H1 (cell line): ENCODE measurements at regions of chr1 and their contacts with region 1.

Region 1: DNA sequence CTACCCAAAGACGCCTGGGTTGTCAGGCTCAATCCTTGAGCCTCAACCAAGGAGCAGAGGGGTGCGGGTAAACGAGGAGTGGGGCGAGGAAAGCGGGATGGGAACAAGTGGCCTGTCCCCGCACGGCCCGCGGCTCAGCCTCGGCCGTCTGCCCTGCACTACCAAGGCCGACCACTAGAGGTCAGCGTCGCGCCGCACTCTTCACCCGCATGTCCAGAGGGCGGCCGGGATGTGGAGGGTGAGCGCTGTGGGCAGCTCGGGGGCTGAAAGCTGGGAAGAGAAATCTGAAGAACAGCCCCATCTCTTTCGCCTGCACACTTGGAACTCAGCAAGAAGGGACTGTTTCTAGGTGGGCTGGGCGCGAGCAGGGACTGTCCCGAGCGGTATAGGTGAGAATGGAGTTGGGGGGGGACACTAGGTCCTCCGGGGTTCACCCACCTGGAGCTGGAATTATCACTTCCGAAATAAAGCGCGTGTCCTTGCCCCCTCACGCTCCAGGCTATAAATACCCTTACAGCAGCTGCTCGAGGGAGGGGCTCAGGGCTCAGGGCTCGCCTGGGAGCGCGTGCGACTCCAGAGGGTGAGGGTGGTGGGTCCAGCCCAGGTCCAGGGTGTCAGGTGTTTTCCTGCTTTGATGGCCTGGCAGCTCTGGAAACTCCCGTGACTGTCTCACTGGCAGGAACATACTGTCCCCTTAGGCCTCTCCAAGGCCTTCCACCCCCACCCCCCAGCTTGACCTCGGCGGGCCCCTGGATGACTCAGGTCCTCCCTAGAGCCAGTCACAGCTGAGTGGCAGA is 9.8 kb downstream of the SLC30A2 start:
- DNase-seq: peak in 1 of 2 experiments; percentile 96
- H3K4me3 ChIP-seq: peak overlapping the region; percentile 39 to 85 (median 76)
- H3K27ac ChIP-seq: no peak overlapping the region
- H3K4me1 ChIP-seq: peaks cover 0 to 8% (median 6%) of the 10 kb centered on the region in 4 experiments; a peak in 5 of 7 replicates
- H3K27me3 ChIP-seq: peaks cover 6 to 26% (median 20%) of the 10 kb centered on the region in 4 experiments; a peak in 6 of 7 replicates
- CTCF ChIP-seq: peak; percentile 90 to 99 (median 93)
- EP300 ChIP-seq: no peak
- POLR2A ChIP-seq: no peak
- RAD21 ChIP-seq: peak; percentile 92 to 95

Region 2: DNA sequence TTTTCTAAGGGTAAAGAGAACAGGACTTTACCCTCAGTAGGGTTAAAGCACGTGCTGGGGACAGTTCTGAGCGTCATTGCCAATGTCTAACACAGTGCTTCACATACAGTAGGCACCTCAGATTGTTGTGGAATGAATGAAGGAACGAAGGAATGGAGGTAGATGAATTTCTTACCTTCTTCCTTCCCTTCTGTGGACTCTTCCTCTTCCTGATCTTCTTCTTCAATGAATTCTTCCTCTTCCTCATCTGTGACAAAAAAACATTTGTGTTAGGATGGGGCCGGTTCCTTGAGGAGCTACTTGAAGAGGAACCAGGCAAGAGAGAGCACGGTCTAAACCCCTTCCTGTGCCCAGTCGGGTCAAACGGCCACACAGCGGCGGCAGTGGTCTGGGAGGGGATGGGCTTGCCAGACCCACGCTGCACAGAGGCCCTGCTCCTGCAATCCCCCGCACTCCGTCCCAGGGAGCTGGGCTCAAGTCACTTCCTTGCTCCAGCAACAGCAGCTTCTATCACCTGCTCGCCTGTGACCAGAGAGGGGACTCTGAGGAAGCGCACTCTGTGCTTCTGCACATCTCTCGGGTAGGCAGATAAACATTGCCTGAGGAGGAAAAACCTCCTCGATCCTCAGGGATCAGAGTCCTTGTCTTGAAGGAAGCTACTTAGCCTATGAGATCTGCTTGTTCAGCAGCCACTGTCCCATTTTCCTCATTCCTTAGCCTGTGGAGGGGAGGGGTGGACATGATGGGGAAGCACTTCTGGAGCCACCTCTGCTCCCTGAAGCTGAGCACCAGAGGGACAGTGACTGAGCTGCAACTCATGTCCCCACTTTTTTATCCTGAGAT is 17.8 kb after region 1 on chr1:
- CTCF ChIA-PET with region 1: interaction called, 14 read pairs
- POLR2A ChIA-PET with region 1: interaction called, 4 read pairs
- DNase-seq: no peak
- H3K4me3 ChIP-seq: no peak overlapping the region
- H3K27ac ChIP-seq: no peak overlapping the region
- H3K4me1 ChIP-seq: 0 out of 7 replicates have a peak, but pooled peaks cover 0 to 2% (median 0%) of the 10 kb centered on the region in 4 experiments
- H3K27me3 ChIP-seq: peaks cover 0 to 6% (median 2%) of the 10 kb centered on the region in 4 experiments; a peak in 3 of 7 replicates
- CTCF ChIP-seq: no peak
- EP300 ChIP-seq: no peak
- POLR2A ChIP-seq: no peak
- RAD21 ChIP-seq: peak in 1 of 2 experiments; percentile 30; a peak in 1 of 4 replicates

Region 3: DNA sequence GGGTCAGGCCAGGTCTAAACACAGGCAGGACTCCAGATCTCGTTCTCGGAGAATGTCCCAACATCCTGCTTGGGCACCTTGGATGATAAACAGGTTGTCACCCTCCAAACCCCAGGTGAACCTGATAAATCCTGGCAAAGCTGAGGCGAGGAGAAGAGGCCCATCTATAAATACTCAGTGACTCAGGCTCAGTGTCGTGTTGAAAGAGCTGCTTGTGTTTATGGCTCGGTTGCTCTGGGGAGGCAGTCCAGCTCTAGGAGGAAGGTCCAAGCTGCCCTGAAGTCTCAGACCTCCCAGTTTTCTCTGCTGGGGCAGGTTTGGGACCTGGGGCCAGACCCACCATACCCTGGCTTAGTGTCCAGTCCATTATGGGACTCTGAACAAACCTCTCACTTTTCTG is 47.1 kb after region 1 on chr1:
- CTCF ChIA-PET with region 1: interaction called, 10 read pairs
- POLR2A ChIA-PET with region 1: no interaction called
- DNase-seq: no peak
- H3K4me3 ChIP-seq: no peak overlapping the region
- H3K27ac ChIP-seq: no peak overlapping the region
- H3K4me1 ChIP-seq: peaks cover 0 to 9% (median 6%) of the 10 kb centered on the region in 4 experiments; a peak in 4 of 7 replicates
- H3K27me3 ChIP-seq: no peaks in the 10 kb centered on the region; a peak in 1 of 7 replicates
- CTCF ChIP-seq: no peak
- EP300 ChIP-seq: no peak
- POLR2A ChIP-seq: no peak
- RAD21 ChIP-seq: no peak

Region 4: DNA sequence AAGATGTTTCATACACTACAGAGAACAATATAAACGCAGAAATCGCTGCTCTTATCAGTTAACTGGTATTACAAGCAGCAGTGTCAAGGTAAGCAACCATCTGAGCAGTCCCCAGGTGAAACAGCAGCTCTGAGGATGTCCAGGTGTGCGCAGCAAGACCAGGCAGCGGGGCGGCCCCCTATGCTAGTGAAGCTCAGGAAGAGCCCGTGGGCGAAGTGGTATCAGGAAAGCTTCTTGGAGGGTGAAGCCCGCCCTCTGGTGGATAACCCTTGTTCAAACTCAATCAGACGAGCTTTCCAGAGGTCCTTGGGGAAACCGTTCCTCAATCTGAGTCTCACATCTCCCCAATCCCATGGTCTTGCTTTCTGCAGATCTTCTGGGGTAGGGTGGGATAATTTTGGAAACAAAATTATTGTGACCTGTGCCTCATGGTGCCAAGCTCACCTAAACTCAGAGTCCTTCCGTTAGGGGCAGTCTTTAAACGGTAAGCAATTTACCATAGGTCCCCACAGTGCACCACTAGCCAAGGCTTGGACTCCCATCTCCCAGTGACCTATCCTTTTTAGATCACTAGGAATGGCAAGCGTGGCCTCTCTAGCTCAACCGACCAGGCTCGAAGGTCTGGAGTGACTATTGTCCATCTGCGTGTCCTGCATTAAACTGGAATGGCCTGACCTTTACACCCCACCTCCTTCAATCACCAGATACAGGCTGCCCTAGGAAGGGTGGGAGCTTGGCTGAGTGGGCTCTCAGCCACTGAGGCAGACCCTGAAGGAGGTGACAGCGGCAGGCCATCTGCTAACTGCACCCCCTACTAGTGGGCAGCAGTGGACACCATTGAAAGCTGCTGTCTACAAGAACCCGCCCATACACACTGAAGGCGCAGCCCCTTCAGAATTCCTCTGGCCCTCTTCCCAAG is 109.1 kb after region 1 on chr1:
- CTCF ChIA-PET with region 1: interaction called, 56 read pairs
- POLR2A ChIA-PET with region 1: interaction called, 5 read pairs
- DNase-seq: peak in 1 of 2 experiments; percentile 85
- H3K4me3 ChIP-seq: no peak overlapping the region
- H3K27ac ChIP-seq: no peak overlapping the region
- H3K4me1 ChIP-seq: no peaks in the 10 kb centered on the region
- H3K27me3 ChIP-seq: peaks cover 0 to 10% (median 4%) of the 10 kb centered on the region in 4 experiments; a peak in 4 of 7 replicates
- CTCF ChIP-seq: peak; percentile 49 to 86 (median 79)
- EP300 ChIP-seq: no peak
- POLR2A ChIP-seq: no peak
- RAD21 ChIP-seq: peak; percentile 86 to 91

Region 5: DNA sequence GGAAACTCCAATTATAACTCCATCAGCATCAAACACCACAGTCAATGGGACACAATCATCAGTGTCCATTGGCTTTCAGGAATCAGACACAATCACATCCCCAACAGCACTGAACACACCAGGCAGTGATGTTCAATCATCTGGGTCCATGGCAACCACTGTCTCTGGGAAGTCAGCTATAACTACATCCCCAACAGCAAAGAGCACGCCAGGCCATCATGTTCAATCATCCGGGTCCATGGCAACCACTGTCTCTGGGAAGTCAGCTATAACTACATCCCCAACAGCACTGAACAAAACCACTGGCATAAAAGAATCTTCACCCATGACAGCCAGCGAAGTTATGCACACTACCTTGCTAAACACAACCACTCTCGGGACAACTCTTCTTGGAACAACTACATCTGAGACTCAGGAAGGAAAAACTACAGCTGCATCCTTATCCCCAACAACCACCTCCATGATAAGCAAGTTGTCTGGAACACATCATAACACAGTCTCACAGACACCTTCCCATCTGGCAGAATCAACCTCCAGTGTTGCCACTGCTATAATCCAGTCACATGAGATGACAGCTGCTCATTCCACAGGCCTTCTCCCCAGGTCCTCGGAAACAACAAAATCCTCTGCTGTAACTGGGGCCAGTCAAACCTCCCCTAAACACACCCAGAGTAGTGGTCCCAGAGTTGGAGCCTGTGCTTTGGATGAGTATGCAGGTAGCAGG is 174.2 kb after region 1 on chr1:
- CTCF ChIA-PET with region 1: no interaction called
- POLR2A ChIA-PET with region 1: no interaction called
- DNase-seq: no peak
- H3K4me3 ChIP-seq: no peak overlapping the region
- H3K27ac ChIP-seq: no peak overlapping the region
- H3K4me1 ChIP-seq: no peaks in the 10 kb centered on the region
- H3K27me3 ChIP-seq: no peaks in the 10 kb centered on the region
- CTCF ChIP-seq: no peak
- EP300 ChIP-seq: no peak
- POLR2A ChIP-seq: no peak
- RAD21 ChIP-seq: no peak

Region 6: DNA sequence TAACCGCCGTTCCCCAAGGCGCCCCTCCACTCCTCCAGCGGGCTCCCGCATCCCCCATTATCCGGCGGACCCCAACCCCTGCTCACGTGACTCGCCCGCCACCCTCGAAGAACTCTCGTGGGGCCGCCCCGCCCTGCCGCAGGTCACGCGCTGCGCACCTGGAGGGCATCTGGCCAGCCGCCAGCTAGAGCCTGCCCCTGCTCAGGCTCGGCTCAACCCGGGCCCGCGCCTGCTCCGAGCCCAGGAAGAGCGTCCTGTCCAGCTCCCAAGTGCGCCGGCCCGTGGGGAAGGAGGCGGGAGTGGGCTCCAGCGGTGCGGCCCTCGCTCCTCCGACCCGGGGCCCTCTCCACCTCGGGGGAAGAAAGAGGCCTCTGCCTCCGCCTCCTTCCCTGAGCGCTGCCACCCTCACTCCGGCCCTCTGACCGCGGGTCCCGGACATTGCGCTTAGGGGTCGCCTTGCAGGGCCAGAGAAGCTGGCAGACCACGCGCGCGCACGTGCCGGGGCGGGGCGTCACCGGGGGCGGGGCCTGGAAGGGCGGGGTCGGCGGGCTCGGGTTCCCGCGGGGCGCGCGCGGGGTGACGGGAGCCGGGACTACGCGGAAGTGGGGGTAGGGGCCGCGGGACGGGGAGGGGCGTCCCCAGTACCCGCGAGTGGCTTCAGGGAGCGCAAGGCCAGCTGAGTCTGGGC is 464.5 kb after region 1 on chr1:
- CTCF ChIA-PET with region 1: no interaction called
- POLR2A ChIA-PET with region 1: no interaction called
- DNase-seq: peak; percentile 25 to 98
- H3K4me3 ChIP-seq: peak overlapping the region; percentile 60 to 76 (median 68)
- H3K27ac ChIP-seq: peak overlapping the region; percentile 43; the same call in 1 of the 2 replicates
- H3K4me1 ChIP-seq: no peaks in the 10 kb centered on the region
- H3K27me3 ChIP-seq: no peaks in the 10 kb centered on the region
- CTCF ChIP-seq: no peak
- EP300 ChIP-seq: no peak
- POLR2A ChIP-seq: no peak; a peak in 1 of 3 replicates
- RAD21 ChIP-seq: no peak